ENCODE measurements at regions of chr2 and their contacts with region 1.

Region 1: DNA sequence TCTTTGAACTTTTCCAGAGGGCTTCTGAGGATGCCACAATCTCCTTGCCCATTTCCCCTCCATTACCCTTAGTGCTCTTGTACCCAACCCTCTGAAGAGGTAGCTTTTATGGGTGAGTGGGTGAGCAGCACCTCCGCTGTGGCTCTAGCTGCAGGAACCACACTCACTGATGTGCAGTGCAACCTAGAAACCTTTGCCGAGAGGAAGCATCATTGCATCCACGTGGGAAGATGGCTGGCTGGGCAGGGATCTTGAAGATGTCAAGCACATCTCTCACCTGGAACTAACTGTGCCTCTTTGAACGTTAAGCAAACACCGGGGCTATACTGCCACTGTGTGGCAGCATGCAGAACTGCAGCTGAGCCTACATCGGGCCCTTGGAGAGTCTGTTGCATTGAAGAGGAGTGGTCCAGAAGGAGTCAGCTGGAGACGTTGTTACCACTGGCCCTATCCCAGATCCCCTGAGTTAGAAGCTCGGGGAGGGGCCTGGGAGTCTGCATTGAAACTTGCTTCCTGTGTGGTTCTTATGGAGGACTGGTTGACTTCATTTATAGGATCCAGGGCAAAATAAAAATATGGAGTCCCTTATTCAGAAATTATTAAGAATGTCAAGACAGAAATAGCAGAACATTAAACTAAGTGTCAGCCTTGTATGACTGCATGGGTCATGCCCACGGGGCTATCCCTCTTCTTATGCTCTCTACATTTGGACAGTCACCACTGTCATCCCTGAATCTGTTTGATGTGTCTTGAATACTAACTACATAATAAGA is 28.7 kb downstream of the IGFBP5 start:
- DNase-seq: peak; percentile 79 to 91
- H3K4me3 ChIP-seq: no peak overlapping the region
- H3K27ac ChIP-seq: no peak overlapping the region
- H3K4me1 ChIP-seq: peaks cover 17 to 30% (median 26%) of the 10 kb centered on the region in 4 donors
- H3K27me3 ChIP-seq: no peaks in the 10 kb centered on the region
- CTCF ChIP-seq: peak in 6 of 7 experiments; percentile 85 to 99 (median 98)
- EP300 ChIP-seq: no peak
- POLR2A ChIP-seq: no peak

Region 2: DNA sequence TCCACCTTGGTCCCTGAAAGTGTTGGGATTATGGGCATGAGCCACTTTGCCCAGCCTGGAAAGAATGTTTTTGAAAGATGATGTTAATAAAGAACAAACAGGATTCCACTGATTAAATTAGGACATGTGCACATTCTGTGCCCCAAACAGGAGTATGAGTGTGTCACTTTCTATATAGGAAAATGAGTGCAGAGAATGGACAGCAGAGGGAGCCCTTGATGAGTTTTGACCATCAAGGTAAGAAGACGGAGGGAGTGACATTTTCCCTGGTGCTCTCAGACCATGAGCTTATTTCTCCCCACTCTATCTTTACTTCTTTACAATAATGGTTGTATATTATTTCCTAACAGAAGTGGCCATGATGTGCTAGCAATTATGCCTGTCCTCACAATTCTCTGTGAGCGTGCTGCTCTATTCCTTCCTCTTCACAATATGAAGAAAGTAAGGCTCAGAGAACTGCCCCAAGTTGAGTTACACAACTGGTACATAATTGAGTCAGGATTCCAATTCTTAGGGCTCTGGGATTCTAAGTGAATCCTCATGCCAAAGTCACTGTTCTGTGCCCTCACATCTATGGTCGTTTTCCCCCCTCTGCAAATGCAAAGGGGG is 147.4 kb before region 1 on chr2:
- intact Hi-C with region 1: loop called (anchors 5 kb)
- DNase-seq: peak; percentile 80 to 94
- H3K4me3 ChIP-seq: no peak overlapping the region
- H3K27ac ChIP-seq: no peak overlapping the region
- H3K4me1 ChIP-seq: peaks cover 0 to 9% (median 4%) of the 10 kb centered on the region in 4 donors
- H3K27me3 ChIP-seq: no peaks in the 10 kb centered on the region
- CTCF ChIP-seq: peak in 5 of 7 experiments; percentile 61 to 93 (median 78)
- EP300 ChIP-seq: no peak
- POLR2A ChIP-seq: no peak